Prostate gland (tissue), 2 donors: ENCODE measurements at regions of chr2 and their contacts with region 1.

Region 1: GRCh38 chr2:71299507-71299906 is 32.1 kb upstream of the ZNF638 start:
- DNase-seq: no peak
- H3K4me3 ChIP-seq: no peak overlapping the region
- H3K27ac ChIP-seq: no peak overlapping the region
- H3K4me1 ChIP-seq: no peaks in the 10 kb centered on the region
- H3K27me3 ChIP-seq: no peaks in the 10 kb centered on the region
- CTCF ChIP-seq: peak; percentile 30 to 84 (median 70)
- POLR2A ChIP-seq: no peak

Region 2: DNA sequence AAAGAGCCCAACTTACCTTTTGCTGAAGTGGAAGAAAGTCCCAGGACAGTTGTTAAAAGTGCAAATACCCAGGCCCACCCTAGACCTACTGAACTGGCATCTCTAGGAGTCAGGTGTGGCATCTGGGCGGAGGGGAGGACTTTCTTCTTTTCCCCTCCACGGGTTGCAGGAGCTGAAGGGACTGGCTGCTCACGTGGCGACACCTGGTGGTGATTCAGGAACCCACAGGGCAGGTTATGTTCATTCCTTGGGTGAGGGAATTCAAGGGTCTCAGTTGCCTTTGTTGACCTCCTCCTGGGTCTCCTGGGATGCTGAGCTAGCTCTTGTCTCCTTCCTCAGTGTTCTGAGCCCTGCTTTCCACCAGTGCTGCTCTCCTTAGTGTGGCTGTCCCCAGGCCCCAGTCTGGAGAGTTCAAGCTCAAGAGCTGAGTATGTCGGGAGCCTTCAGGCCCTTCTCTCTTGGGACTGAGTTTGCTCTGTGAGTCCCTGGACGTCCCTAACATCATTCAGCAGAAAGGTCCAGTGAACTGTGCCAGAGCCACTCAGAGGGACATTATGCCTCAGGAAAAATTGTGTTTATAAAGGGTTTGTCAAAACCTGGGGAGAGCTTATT is 210.8 kb after region 1 on chr2:
- intact Hi-C with region 1: loop called (anchors 1 kb)
- DNase-seq: peak; percentile 53
- H3K4me3 ChIP-seq: no peak overlapping the region
- H3K27ac ChIP-seq: no peak overlapping the region
- H3K4me1 ChIP-seq: no peaks in the 10 kb centered on the region
- H3K27me3 ChIP-seq: no peaks in the 10 kb centered on the region
- CTCF ChIP-seq: peak; percentile 75 to 88 (median 87)
- POLR2A ChIP-seq: no peak